Activated naive CD4-positive, alpha-beta T cell treated with anti-CD3 and anti-CD28 coated beads for 36 hours (primary cell): ENCODE measurements at regions of chr11 and their contacts with region 1.

Region 1: DNA sequence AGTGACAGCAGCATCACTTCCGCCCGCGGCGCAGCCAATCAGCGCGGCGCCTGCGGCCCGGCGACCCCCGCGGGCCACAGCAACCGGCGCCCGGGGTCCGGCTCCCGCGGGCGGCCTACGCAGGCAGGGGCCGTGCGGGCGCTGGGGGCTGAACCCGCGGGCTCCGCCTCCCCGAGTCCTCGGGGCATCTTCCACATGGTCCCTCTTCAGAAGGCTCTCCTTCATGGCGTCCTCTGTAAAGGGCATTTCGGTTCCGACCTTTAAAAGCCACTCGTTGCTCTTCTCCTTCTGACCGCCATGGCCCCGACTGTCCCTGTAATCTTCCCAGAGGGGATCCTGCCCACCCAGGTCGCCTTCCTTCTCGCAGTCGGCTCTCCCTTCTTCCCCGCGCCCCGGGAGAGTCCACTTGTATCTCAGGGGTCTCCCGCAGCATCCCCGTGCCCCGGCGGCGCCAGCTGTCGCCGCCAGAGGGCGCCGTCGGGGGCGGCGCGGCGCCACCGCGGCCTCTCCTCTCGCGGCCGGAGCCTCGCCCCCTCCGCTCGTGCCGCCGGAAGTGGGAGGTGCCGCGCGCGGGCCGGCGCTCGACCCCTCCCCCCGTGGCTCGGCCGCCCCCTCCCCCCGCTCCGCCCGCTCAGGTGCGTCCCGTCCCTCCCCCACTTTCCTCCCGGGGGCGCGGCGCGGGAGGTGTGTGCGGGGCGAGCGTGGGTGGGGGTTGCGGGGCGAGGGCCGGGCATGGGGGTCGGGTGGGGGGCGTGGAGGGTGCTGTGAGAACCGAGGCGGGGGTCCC is at the start of gene RNF214:
- DNase-seq: peak; percentile 74
- H3K4me3 Mint-ChIP-seq: peak within 1 kb of the TSS; percentile 99
- H3K27ac Mint-ChIP-seq: peak within 1 kb of the TSS; percentile 99
- H3K4me1 Mint-ChIP-seq: peaks cover 34% of the 10 kb centered on the region
- H3K27me3 Mint-ChIP-seq: no peaks in the 10 kb centered on the region
- total RNA-seq, gene RNF214: 14.0 to 14.4 TPM

Region 2: DNA sequence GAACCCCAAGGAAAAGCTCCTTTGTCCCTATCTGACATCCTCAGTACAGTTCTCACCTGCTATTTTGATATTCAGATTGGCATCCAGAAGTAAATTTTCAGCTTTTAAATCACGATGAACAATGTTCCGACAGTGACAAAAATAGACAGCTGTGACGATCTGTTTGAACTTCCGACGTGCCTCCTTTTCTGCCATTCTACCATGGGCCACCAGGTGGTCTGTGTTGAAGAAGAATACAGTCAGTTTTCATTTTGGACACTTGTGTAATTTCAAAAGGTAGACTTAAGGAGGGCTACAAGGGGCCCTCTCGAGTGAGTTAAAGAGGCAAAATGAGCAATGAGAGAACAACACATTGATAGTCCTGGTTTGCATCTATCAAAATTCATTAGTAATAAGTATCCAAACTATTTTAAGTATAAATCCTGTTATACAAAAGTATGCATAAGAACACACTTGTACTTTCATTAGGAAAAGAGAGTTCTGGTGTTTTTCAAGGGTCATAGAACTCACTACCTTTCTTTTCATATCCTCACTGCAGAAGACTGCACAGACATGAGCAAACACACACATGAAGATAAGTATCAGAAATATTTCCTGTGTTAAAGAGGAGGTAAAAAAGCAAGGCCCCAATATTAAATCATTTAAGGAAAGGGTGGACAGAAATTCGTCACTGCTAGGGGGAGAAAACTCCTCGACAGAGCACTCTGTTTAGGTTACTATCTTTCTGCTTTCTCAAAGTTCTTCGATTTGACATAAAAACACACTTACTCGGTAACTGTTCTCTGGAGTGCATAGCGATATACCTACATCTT is 304.9 kb before region 1 on chr11:
- CTCF ChIA-PET with region 1: no interaction called
- intact Hi-C with region 1: loop called (anchors 2 kb)
- DNase-seq: peak; percentile 73
- H3K4me3 Mint-ChIP-seq: peak overlapping the region; percentile 34
- H3K27ac Mint-ChIP-seq: peak overlapping the region; percentile 75
- H3K4me1 Mint-ChIP-seq: peaks cover 61% of the 10 kb centered on the region
- H3K27me3 Mint-ChIP-seq: no peaks in the 10 kb centered on the region

Region 3: DNA sequence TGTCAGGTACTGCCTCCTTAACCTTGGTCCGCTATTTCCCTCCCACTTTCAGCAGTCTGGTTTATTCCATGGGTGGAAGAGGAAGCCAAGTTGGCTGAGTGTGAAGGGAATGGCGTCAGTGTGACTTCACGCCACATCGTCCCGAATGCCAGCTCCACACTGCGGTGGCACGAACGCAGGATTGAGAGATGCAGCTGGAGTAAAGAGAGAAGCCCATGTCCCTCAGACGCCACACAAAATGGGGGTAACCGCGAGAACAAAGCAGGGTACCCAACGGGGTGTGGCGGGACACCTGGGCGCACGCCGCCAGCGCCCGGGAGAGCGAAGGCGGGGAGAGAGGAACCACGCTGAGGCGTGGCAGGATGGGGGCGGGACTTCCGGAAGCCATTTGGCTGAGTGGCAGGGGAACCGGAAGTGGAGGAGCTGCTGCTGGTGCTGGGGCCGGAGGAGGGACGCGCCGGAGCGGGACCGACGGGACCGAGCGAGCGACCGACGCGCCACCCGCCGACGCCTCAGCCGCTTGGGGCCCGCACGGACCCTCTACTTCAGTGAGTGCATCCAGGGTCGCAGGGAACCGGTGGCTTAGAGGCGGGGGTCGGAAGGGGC is 88.3 kb before region 1 on chr11 and contains the start of gene PAFAH1B2:
- CTCF ChIA-PET with region 1: interaction called, 6 read pairs
- intact Hi-C with region 1: loop called (anchors 1 kb)
- DNase-seq: peak; percentile 98
- H3K4me3 Mint-ChIP-seq: peak within 1 kb of the TSS; percentile 95
- H3K27ac Mint-ChIP-seq: peak within 1 kb of the TSS; percentile 91
- H3K4me1 Mint-ChIP-seq: peaks cover 37% of the 10 kb centered on the region
- H3K27me3 Mint-ChIP-seq: no peaks in the 10 kb centered on the region
- total RNA-seq, gene PAFAH1B2: 43.7 to 44.3 TPM

Region 4: GRCh38 chr11:117327567-117328374 is 95.5 kb after region 1 on chr11 and contains the start of gene CEP164:
- CTCF ChIA-PET with region 1: interaction called, 6 read pairs
- intact Hi-C with region 1: loop called (anchors 1 kb)
- DNase-seq: peak; percentile 97
- H3K4me3 Mint-ChIP-seq: peak within 1 kb of the TSS; percentile 61
- H3K27ac Mint-ChIP-seq: peak within 1 kb of the TSS; percentile 71
- H3K4me1 Mint-ChIP-seq: peaks cover 3% of the 10 kb centered on the region
- H3K27me3 Mint-ChIP-seq: no peaks in the 10 kb centered on the region
- total RNA-seq, gene CEP164: 23.9 to 24.6 TPM

Region 5: GRCh38 chr11:118046051-118046963 is 814.0 kb after region 1 on chr11:
- CTCF ChIA-PET with region 1: no interaction called
- intact Hi-C with region 1: loop called (anchors 5 kb)
- DNase-seq: peak; percentile 52
- H3K4me3 Mint-ChIP-seq: no peak overlapping the region
- H3K27ac Mint-ChIP-seq: peak overlapping the region; percentile 63
- H3K4me1 Mint-ChIP-seq: peaks cover 78% of the 10 kb centered on the region
- H3K27me3 Mint-ChIP-seq: no peaks in the 10 kb centered on the region